ENCODE measurements at regions of chr13 and their contacts with region 1.

Region 1: GRCh38 chr13:59112221-59112718 is 1051.5 kb downstream of the DIAPH3 start:
- DNase-seq: no peak
- H3K4me3 ChIP-seq: no peak overlapping the region
- H3K27ac ChIP-seq: no peak overlapping the region
- H3K4me1 ChIP-seq: no peaks in the 10 kb centered on the region
- H3K27me3 ChIP-seq: no peaks in the 10 kb centered on the region
- CTCF ChIP-seq: no peak

Region 2: DNA sequence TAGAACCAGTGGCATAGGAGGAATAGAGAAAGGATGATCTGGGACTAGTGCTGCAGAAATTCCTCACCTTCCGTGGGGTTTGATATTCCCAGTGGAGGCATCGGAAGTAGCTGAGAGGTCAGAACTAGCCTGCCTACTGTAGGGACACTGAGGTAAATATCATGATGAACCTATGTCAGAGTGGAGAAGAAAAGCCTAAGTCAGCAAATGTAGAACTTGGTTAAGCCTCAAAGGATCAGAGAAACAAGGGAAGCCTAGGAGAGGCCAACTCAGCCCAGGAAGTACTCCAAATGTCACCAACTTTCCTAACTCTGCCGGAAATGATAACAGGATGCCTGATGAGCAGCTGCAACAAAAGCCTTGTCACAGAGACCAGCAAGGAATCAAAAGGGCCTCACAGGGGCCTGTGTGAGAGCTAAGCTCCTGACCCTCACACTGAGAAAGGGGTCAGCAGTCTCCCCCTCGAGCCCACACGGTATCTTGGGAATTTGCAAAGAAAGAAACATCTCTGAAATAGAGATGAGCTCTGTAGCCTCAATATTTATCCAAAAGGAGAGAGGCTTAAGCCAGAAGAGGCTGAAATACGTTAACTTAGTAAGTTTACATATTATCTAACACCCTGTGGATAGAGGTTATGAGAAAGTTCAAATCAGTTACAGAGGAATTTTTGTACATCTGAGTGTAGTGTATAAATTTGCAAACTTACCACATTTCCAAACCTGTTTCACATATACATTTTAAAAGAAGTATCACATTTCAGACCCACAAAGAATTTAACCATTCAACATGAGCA is 12.9 kb before region 1 on chr13:
- CTCF ChIA-PET with region 1: no interaction called
- POLR2A ChIA-PET with region 1: no interaction called
- intact Hi-C with region 1: no loop called
- DNase-seq: no peak
- H3K4me3 ChIP-seq: no peak overlapping the region
- H3K27ac ChIP-seq: no peak overlapping the region
- H3K4me1 ChIP-seq: no peaks in the 10 kb centered on the region
- H3K27me3 ChIP-seq: no peaks in the 10 kb centered on the region
- CTCF ChIP-seq: no peak

Region 3: DNA sequence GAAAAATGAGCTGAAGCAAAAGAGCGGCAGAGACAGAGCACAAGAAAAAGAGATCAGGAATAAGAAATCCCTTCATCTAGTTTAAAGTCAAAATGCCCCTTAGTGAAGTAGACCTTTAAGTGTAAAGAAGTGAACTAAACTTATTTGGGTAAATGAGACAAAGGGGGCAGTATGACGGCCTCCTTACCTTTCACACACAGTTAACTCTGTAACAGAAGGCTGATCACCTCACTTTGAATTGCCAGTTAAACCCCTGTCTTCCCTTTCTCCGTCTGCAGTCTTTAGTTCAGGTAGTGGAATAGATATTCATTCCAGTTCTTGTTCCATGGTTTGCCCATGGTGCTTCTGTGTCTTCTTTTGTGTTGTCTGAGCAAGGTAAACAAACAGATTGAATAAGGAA is 21.6 kb after region 1 on chr13:
- CTCF ChIA-PET with region 1: no interaction called
- POLR2A ChIA-PET with region 1: no interaction called
- intact Hi-C with region 1: loop called (anchors 1 kb)
- DNase-seq: no peak
- H3K4me3 ChIP-seq: no peak overlapping the region
- H3K27ac ChIP-seq: no peak overlapping the region
- H3K4me1 ChIP-seq: no peaks in the 10 kb centered on the region
- H3K27me3 ChIP-seq: no peaks in the 10 kb centered on the region
- CTCF ChIP-seq: no peak

Region 4: GRCh38 chr13:59706101-59706976 is 594.1 kb after region 1 on chr13:
- CTCF ChIA-PET with region 1: no interaction called
- POLR2A ChIA-PET with region 1: no interaction called
- intact Hi-C with region 1: no loop called
- DNase-seq: no peak
- H3K4me3 ChIP-seq: no peak overlapping the region
- H3K27ac ChIP-seq: no peak overlapping the region
- H3K4me1 ChIP-seq: no peaks in the 10 kb centered on the region
- H3K27me3 ChIP-seq: no peaks in the 10 kb centered on the region
- CTCF ChIP-seq: no peak